ENCODE measurements at regions of chr15 and their contacts with region 1.

Region 1: DNA sequence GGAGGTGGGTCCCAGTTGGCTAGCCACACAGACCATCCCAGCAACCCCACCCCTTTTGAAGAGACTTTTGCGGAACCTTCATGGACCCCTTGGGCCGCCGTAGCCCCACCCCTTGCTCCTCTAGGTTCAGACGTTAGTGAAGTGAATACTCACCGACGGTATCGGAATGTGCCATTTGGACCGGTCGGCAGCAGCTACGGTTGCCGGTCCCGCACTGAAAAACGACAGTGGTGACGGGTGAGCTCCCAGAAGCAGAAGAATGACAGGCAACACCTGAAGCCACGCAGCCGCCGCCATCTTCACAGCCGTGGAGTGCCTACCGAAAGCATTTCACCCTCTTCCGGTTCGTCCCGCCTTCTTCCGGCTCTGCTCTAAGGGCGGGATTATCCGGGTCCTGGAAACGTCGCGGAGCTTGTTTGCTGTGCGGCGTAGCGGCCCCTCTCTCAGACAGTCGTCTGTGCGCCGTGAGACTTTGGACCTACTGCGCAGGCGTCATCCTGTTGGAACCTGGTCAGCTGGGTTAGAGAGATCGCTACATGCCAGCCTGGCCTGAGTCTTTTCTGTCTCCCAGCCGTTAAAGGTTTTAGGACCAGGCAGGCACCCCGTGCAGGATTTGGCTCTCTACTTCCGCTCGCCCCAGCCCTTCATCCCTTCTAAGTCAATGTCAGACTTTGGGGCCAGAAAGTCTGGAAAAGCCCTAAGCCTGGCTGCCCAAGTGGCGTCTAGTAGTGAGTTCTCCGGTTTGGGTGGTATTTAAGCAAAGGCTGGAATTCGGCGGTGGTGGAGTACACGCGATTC is at the starts of genes GANC and TMEM87A:
- DNase-seq: peak; percentile 98
- H3K4me3 Mint-ChIP-seq: peak within 1 kb of the TSS; percentile 99
- H3K27ac Mint-ChIP-seq: peak within 1 kb of the TSS; percentile 99
- H3K4me1 Mint-ChIP-seq: peaks cover 44% of the 10 kb centered on the region
- H3K27me3 Mint-ChIP-seq: no peaks in the 10 kb centered on the region
- total RNA-seq, gene GANC: 23.5 to 26.1 TPM
- total RNA-seq, gene TMEM87A: 26.1 to 28.7 TPM

Region 2: GRCh38 chr15:41930221-41930866 is 343.0 kb before region 1 on chr15:
- CTCF ChIA-PET with region 1: no interaction called
- POLR2A ChIA-PET with region 1: no interaction called
- intact Hi-C with region 1: loop called (anchors 10 kb)
- DNase-seq: no peak
- H3K4me3 Mint-ChIP-seq: no peak overlapping the region
- H3K27ac Mint-ChIP-seq: no peak overlapping the region
- H3K4me1 Mint-ChIP-seq: peaks cover 63% of the 10 kb centered on the region
- H3K27me3 Mint-ChIP-seq: no peaks in the 10 kb centered on the region

Region 3: DNA sequence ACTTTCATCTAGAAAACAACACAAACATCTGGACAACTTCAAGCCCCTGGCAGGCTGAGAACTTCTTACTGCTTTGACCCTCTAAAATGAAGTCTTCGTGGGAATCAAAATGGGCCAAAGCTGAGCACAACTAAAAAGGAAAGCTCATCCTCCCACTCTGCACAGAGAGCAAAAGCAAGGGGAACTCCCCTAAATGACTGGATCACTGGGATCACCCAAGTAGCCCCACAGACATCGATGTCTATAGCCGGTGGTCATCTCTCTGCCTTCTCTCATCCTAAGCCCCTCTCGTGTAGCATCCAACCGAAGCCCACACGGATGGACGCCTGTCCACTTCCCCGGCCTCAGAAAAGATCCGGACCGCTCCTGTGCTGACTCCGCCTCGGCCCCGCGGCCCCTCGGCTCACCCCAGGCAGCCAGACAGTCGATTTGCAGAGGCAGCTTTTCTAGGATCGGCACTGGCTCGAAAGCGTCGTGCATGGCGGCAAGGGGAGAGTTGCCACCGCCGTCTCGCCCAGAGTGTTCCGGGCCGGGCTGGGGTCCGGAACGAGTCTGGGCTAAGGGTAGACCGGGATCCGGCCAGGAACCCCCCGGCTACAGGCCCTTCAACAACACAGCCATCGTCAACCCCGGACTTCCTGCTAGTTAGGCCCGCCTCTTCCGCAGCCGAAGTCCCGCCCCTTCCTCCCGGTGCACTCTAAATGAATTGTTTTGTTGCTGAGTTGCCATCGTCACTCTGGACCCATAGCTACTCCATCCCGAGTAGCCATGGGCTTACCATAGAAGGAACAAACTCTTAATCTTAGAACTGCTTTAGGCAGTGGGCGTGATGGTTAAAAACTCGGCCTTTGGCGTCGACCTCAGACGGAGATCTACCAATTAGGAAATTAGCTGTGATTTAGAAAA is 65.4 kb before region 1 on chr15 and contains the start of gene VPS39:
- CTCF ChIA-PET with region 1: no interaction called
- POLR2A ChIA-PET with region 1: interaction called, 7 read pairs
- intact Hi-C with region 1: loop called (anchors 2 kb)
- DNase-seq: peak; percentile 92
- H3K4me3 Mint-ChIP-seq: peak within 1 kb of the TSS; percentile 93
- H3K27ac Mint-ChIP-seq: peak within 1 kb of the TSS; percentile 94
- H3K4me1 Mint-ChIP-seq: peaks cover 31% of the 10 kb centered on the region
- H3K27me3 Mint-ChIP-seq: no peaks in the 10 kb centered on the region
- total RNA-seq, gene VPS39: 52.6 to 57.8 TPM

Region 4: DNA sequence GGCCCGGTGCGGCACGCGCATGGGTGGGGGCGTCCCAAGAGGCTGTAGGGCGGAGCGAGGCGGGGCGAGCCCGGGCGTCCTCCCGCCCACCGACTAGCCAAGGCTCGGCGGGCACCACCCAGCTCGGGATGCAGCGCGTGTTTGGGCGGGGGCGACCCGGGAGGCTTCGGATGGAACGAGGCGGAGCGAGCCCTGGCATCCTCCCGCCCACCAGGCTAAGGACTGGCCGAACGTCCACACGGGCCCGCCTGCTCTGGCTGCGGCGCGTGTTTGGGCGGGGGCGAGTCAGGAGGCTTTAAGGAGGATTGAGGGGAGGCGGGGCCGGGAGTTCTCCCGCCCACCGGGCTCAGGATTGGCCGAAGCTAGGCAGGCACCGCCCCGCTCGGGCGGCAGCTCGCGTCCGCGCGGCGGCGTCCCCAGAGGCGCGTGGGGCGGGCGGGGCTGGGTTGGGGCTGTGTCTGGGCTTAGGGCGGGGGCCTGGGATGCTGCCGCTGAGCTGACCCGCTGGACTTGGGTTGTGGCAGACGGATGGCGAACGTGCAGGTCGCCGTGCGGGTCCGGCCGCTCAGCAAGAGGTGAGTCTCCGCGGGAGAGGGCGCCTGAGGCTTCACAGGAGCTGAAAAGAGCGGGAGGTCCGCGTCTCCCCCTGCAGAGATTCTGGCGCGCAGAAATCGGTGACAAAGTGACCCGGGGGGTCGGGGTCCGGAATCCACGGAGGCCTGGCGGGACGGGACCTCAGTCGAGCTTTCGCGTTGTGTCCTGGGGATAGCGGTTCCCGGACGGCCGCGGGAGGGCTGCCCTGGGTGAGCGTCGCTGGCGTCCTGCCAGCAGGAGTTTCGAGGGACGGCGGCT is 302.1 kb after region 1 on chr15 and contains the start of gene STARD9:
- CTCF ChIA-PET with region 1: no interaction called
- POLR2A ChIA-PET with region 1: no interaction called
- intact Hi-C with region 1: loop called (anchors 10 kb)
- DNase-seq: peak; percentile 97
- H3K4me3 Mint-ChIP-seq: peak within 1 kb of the TSS; percentile 84
- H3K27ac Mint-ChIP-seq: no peak within 1 kb of the TSS
- H3K4me1 Mint-ChIP-seq: peaks cover 15% of the 10 kb centered on the region
- H3K27me3 Mint-ChIP-seq: peaks cover 15% of the 10 kb centered on the region
- total RNA-seq, gene STARD9: 3.4 to 3.8 TPM

Region 5: DNA sequence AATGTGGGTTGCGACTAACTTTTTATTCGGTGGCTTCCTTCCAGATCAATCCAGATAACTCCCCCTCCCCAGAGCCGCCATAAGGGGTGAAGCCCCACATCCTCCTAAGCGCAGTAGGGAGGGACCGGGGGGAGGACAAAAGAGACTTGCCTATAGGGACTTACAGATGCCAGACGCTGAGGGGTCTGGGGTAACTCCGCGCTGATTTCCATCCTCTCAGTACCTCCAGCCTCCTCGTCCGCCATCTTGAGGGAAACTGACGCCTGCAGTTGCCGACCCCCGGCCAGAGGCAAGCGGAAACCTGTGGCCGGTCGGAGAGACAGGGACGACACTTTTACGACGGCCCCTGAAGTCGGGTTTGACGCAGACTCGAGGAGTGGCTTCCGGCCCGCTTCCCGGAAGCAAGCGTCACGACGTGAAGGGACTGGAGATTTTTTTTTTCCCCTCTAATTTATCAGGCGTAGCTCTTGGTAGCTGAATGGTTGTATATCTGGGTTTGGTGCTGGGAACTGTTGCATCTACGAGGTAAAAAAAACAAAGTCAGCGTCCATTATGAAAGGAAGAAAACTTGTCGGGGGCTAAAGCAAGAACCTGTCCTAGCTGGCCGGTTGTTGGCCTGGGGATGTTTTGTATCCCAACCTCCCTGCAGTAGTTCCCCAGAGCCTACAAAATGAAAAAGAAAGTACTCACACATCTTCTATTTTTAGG is 832.6 kb after region 1 on chr15 and contains the start of gene UBR1:
- CTCF ChIA-PET with region 1: no interaction called
- POLR2A ChIA-PET with region 1: no interaction called
- intact Hi-C with region 1: loop called (anchors 1 kb)
- DNase-seq: peak; percentile 95
- H3K4me3 Mint-ChIP-seq: peak within 1 kb of the TSS; percentile 89
- H3K27ac Mint-ChIP-seq: peak within 1 kb of the TSS; percentile 95
- H3K4me1 Mint-ChIP-seq: peaks cover 39% of the 10 kb centered on the region
- H3K27me3 Mint-ChIP-seq: no peaks in the 10 kb centered on the region
- total RNA-seq, gene UBR1: 24.5 to 29.7 TPM

Measured in activated CD4-positive, alpha-beta memory T cell treated with anti-CD3 and anti-CD28 coated beads for 36 hours (primary cell).